ENCODE measurements at regions of chr17 and their contacts with region 1.

Region 1: DNA sequence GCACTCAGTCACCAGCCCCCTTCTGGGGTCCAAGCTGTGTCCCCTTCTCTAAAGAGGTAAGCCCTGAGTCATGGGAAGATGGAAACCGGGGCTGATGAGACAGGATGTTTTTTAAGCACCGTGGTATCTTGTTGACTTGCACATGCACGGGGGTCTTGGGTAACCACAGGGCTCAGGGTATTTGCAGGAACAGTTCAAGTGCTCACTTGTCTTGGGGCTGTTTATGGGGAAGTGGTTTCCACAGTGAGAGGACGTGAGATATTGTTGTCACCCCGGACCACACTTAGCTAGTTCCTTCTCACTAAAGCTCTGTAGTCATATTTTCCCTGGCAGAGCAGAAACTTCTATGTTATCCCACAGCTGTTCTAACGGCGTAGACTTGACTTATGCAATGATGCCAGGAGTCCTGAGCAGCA is 7.7 kb downstream of the CCL3L1 start:
- DNase-seq: no peak
- ATAC-seq: peak; percentile 82

Region 2: DNA sequence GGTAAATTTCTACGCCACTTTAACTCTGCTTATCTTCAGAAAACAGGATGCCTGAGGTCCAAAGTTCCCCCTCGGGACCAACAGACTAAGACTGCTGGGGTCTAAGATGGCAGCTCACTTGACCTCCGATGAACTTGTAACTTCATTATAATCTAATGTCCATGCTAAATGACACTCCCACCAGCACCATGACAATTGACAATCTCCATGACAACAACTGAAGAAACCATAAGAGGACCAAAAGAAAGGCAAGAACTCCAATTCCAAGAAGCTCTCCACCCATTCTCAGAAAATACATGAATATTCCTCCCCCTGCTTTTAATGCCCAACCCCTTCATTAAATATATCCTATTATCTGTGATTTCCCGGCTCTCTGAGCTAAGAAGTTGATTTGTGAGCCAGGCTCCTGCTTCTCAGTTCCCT is 77.8 kb before region 1 on chr17:
- intact Hi-C with region 1: loop called (anchors 5 kb)
- DNase-seq: no peak
- ATAC-seq: no peak